ENCODE measurements at regions of chr17 and their contacts with region 1.

Region 1: DNA sequence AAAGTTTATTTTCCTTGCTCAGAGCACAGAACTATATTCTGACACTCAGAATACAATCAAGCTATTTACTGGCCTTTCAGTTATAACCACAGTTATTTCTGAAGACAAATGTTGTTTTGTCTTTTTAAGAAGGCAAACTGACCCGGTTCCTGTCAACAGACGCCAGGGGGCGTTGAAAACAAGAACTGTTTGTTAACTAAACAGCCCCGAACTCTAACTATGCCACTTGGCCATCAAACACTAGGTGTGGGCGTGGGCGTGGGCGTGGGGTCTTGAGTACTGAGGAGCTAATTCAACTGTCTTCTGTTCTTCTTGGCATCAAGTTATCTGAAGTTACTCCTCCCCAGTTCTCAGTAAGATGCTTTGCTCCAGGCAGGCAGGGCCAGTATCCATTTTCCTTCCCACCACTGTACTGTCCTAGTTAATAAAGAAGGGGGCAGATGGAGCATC is 63.2 kb upstream of the MTMR4 start:
- DNase-seq: peak; percentile 56
- H3K4me3 ChIP-seq: no peak overlapping the region; a peak in 1 of 4 replicates
- H3K27ac ChIP-seq: no peak overlapping the region
- H3K4me1 ChIP-seq: no peaks in the 10 kb centered on the region
- H3K27me3 ChIP-seq: 0 out of 2 replicates have a peak, but pooled peaks cover 4% of the 10 kb centered on the region
- CTCF ChIP-seq: peak; percentile 83
- EP300 ChIP-seq: no peak
- RAD21 ChIP-seq: peak; percentile 59

Region 2: DNA sequence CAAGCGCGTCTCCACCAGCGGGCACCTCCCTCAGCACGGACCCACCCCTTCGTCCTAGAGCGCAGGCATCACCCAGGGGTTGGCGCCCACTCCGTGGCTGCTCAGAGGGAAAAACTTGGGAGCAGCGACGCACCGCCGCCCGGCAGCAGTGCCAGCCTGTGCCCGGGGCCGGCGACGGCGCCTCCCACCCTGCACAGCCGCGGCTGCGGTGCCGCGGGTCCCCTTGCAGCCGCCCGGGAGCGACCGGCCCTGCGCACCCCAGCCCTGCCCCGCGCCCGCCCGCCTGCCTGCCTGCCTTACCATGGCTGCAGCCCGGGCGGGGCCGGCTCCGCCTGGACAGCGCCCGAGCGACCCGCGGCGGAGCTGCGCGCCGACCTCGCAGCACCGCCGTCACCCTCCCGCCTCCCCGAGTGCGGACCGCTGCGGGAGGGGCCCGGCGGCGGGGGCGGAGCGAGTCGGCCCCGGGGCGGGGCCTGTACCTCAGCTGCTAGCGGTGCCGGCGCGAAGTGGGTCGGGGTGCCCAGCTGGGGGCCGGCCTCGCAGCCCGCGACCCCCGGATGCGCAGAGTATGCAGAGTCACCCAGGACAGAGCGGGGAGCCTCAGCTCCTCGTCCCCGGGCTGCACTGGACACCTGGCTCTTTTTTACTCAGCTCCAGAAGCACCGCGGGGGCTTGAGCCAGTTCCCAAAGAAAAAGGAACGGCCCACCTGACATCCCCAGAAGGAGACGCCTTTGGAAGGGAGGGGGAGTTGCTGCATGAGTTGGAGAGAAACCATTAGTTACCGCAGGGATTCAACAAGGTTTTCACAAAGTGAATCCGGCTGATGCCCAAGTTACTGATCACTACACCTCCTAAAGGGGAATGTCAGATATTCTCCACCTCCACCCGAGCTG is 45.8 kb before region 1 on chr17:
- CTCF ChIA-PET with region 1: interaction called, 27 read pairs
- POLR2A ChIA-PET with region 1: no interaction called
- DNase-seq: peak; percentile 95
- H3K4me3 ChIP-seq: peak overlapping the region; percentile 59 to 74
- H3K27ac ChIP-seq: no peak overlapping the region
- H3K4me1 ChIP-seq: peaks cover 5 to 21% of the 10 kb centered on the region in 2 experiments; a peak in 2 of 4 replicates
- H3K27me3 ChIP-seq: no peaks in the 10 kb centered on the region
- CTCF ChIP-seq: no peak
- EP300 ChIP-seq: no peak
- RAD21 ChIP-seq: no peak

Region 3: GRCh38 chr17:58556833-58557250 is 20.8 kb before region 1 on chr17:
- CTCF ChIA-PET with region 1: interaction called, 18 read pairs
- POLR2A ChIA-PET with region 1: no interaction called
- DNase-seq: no peak
- H3K4me3 ChIP-seq: no peak overlapping the region
- H3K27ac ChIP-seq: no peak overlapping the region
- H3K4me1 ChIP-seq: no peaks in the 10 kb centered on the region
- H3K27me3 ChIP-seq: no peaks in the 10 kb centered on the region; the same call in 1 of the 2 replicates
- CTCF ChIP-seq: no peak
- EP300 ChIP-seq: no peak
- RAD21 ChIP-seq: no peak

Region 4: GRCh38 chr17:58587702-58588254 is 10.1 kb after region 1 on chr17:
- CTCF ChIA-PET with region 1: interaction called, 56 read pairs
- POLR2A ChIA-PET with region 1: no interaction called
- DNase-seq: peak; percentile 88
- H3K4me3 ChIP-seq: no peak overlapping the region
- H3K27ac ChIP-seq: no peak overlapping the region
- H3K4me1 ChIP-seq: no peaks in the 10 kb centered on the region; a peak in 1 of 4 replicates
- H3K27me3 ChIP-seq: no peaks in the 10 kb centered on the region
- CTCF ChIP-seq: peak; percentile 99
- EP300 ChIP-seq: no peak
- RAD21 ChIP-seq: peak; percentile 91

Region 5: GRCh38 chr17:58640222-58641000 is 62.7 kb after region 1 on chr17:
- CTCF ChIA-PET with region 1: no interaction called
- POLR2A ChIA-PET with region 1: no interaction called
- DNase-seq: no peak
- H3K4me3 ChIP-seq: no peak overlapping the region
- H3K27ac ChIP-seq: no peak overlapping the region
- H3K4me1 ChIP-seq: no peaks in the 10 kb centered on the region
- H3K27me3 ChIP-seq: no peaks in the 10 kb centered on the region
- CTCF ChIP-seq: no peak
- EP300 ChIP-seq: no peak
- RAD21 ChIP-seq: no peak

Region 6: GRCh38 chr17:58664302-58664701 is 86.6 kb after region 1 on chr17:
- CTCF ChIA-PET with region 1: no interaction called
- POLR2A ChIA-PET with region 1: no interaction called
- DNase-seq: no peak
- H3K4me3 ChIP-seq: no peak overlapping the region
- H3K27ac ChIP-seq: no peak overlapping the region
- H3K4me1 ChIP-seq: no peaks in the 10 kb centered on the region; a peak in 1 of 4 replicates
- H3K27me3 ChIP-seq: no peaks in the 10 kb centered on the region
- CTCF ChIP-seq: no peak
- EP300 ChIP-seq: no peak
- RAD21 ChIP-seq: no peak

Measured in SK-N-SH (cell line).